ENCODE measurements at regions of chr20 and their contacts with region 1.

Region 1: DNA sequence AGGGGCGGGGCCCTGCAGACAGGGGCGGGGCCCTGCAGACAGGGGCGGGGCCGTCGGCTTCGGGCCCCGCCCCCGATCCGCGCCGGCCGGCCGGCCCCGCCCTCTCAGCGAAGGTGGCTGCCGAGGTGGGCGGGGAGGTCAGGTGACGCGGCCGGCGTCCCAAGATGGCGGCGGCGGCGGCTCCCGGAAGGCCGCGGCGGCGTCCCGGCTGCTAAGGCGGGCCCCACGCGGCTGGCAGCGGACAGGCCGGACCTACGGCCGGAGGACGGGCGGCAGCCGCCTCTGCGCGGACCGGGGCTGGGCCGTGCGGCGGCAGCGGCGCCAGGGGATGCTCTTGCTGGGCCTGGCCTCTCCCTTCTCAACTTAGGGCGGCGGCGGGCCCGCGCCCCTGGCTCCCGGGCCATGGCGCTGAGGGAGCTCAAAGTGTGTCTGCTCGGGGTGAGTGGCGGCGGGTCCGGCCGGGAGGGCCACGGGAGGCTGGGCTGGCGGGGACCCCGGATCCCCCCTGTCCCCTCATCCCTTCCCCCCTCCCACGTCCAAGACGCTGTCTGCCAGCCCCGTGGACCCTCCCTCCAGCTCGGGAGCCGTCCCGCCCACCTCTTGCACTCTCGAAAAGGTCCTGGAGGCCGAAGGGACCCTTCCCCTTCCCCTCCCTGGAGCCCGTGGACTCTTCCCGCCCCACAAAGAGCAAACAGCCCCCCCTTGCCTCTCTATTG is at the start of gene RAB22A:
- DNase-seq: peak; percentile 66
- H3K4me3 ChIP-seq: peak within 1 kb of the TSS; percentile 96 to 99 (median 98)
- H3K27ac ChIP-seq: peak within 1 kb of the TSS; percentile 85
- H3K4me1 ChIP-seq: peaks cover 10% of the 10 kb centered on the region
- H3K27me3 ChIP-seq: no peaks in the 10 kb centered on the region
- CTCF ChIP-seq: no peak
- POLR2A ChIP-seq: peak; percentile 95
- total RNA-seq, gene RAB22A: 15.7 and 16.3 TPM in 2 replicates

Region 2: DNA sequence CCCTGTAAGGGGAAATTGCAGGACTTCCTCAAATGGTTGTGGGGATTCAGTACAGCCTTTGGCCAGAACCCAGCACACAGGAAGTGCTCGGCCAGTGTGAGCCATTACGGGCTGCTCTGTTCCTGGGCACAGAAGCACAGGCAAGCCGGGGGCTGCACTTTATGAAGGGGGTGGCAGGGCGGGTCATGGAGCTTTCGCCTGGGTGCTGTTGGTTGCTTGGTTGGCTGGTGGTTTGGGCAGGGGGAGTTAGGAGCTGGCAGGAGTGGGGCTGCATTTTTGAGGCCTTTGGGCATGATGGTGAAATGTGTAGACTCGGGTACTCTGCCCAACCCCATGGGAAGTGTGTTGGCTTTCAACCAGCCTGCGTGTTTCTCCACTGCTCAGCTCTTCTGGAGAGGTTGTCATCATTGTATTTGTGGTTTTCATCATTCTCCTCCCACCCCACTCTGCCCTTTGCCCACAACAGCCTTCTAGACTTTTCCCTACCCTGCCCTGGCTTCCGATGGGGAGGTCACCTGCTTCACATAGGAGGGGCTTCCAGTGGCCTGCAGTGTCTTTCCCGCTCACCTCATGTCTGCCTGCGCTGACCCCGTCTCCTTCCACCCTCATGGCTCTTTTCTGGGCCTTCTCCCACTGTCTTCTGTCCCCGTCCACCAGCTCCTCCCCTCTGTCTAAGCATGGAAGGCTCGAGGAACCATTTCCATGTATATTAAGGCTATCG is 934.6 kb before region 1 on chr20:
- CTCF ChIA-PET with region 1: no interaction called
- POLR2A ChIA-PET with region 1: no interaction called
- dilution Hi-C with region 1: no loop called
- intact Hi-C with region 1: no loop called
- DNase-seq: no peak
- H3K4me3 ChIP-seq: no peak overlapping the region
- H3K27ac ChIP-seq: no peak overlapping the region
- H3K4me1 ChIP-seq: no peaks in the 10 kb centered on the region
- H3K27me3 ChIP-seq: no peaks in the 10 kb centered on the region
- CTCF ChIP-seq: no peak
- POLR2A ChIP-seq: no peak

Region 3: GRCh38 chr20:58251921-58252591 is 57.7 kb before region 1 on chr20:
- CTCF ChIA-PET with region 1: interaction called, 3 read pairs
- POLR2A ChIA-PET with region 1: no interaction called
- dilution Hi-C with region 1: no loop called
- intact Hi-C with region 1: loop called (anchors 2 kb)
- DNase-seq: peak; percentile 80
- H3K4me3 ChIP-seq: no peak overlapping the region
- H3K27ac ChIP-seq: peak overlapping the region; percentile 73
- H3K4me1 ChIP-seq: peaks cover 21% of the 10 kb centered on the region
- H3K27me3 ChIP-seq: no peaks in the 10 kb centered on the region
- CTCF ChIP-seq: no peak
- POLR2A ChIP-seq: no peak

Region 4: GRCh38 chr20:58342104-58342960 is 32.6 kb after region 1 on chr20:
- CTCF ChIA-PET with region 1: no interaction called
- POLR2A ChIA-PET with region 1: no interaction called
- dilution Hi-C with region 1: no loop called
- intact Hi-C with region 1: loop called (anchors 1 kb)
- DNase-seq: peak; percentile 69
- H3K4me3 ChIP-seq: peak overlapping the region in 1 of 3 experiments; percentile 24
- H3K27ac ChIP-seq: peak overlapping the region; percentile 79
- H3K4me1 ChIP-seq: peaks cover 36% of the 10 kb centered on the region
- H3K27me3 ChIP-seq: no peaks in the 10 kb centered on the region
- CTCF ChIP-seq: no peak
- POLR2A ChIP-seq: no peak

Region 5: DNA sequence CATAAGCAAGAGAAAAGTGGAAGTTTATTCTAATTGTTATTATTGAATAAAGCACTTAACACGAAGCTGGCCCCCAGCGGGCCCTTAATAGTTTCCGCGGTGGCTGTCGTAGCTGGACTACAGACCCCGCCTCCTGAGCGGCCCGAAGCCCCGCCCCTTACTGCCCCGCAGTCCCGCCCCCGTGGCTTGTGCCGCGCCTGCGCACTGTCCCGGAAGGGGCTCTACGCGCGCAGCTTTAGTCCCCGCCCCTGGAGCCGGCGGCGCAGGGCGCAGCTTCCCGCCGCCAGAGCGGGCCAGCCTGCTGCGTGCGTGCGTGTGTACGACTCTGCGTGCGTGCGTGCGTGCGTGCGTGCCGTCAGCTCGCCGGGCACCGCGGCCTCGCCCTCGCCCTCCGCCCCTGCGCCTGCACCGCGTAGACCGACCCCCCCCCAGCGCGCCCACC is 79.2 kb after region 1 on chr20 and contains the start of gene VAPB:
- CTCF ChIA-PET with region 1: no interaction called
- POLR2A ChIA-PET with region 1: interaction called, 5 read pairs
- dilution Hi-C with region 1: no loop called
- intact Hi-C with region 1: loop called (anchors 1 kb)
- DNase-seq: peak; percentile 97
- H3K4me3 ChIP-seq: peak within 1 kb of the TSS; percentile 54 to 98 (median 81)
- H3K27ac ChIP-seq: peak within 1 kb of the TSS; percentile 74
- H3K4me1 ChIP-seq: peaks cover 14% of the 10 kb centered on the region
- H3K27me3 ChIP-seq: no peaks in the 10 kb centered on the region
- CTCF ChIP-seq: no peak
- POLR2A ChIP-seq: peak; percentile 76
- total RNA-seq, gene VAPB: 47.8 and 48.9 TPM in 2 replicates

Region 6: DNA sequence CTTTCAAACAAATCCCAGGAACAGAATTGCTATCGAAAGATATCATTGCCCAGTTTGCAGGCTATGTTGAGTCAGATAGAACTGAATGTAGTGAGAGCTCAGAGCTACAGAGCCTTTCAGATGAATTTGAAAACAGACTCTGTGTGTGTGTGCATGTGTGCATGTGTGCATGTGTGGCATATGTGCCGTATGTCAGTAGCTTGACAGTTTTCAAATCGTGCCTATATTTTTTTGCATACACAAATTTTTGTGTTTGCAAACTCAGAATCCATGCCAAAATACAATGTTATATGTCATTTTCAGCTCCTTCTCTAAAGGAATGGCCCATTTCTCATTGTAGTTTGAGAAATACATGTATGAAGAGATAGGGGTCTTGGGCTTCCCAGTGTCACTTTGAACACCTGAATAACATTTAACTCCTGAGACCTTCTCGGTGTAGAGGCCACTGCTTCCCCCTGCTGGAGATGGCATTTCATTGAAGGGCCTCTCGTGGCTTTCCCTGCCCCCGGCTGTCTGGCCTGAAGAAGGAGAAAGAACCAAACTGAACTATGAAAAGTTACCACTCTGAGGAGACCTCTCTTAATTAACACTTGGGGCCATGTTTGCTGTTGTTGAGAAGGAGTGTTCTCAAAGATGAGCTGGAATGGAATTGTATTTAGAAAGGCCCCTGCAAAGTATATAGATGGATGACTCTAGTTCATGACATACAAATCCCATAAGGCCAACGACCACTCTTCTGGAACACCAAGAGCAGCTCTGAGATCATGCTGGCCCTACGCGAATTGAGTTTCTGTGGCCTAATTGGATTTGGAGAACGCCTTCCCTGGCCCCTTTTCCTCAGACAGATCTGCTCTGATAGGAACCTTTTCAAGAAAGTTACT is 138.0 kb after region 1 on chr20:
- CTCF ChIA-PET with region 1: interaction called, 4 read pairs
- POLR2A ChIA-PET with region 1: no interaction called
- dilution Hi-C with region 1: no loop called
- intact Hi-C with region 1: loop called (anchors 2 kb)
- DNase-seq: peak; percentile 66
- H3K4me3 ChIP-seq: no peak overlapping the region
- H3K27ac ChIP-seq: no peak overlapping the region
- H3K4me1 ChIP-seq: no peaks in the 10 kb centered on the region
- H3K27me3 ChIP-seq: no peaks in the 10 kb centered on the region
- CTCF ChIP-seq: peak; percentile 68 to 73
- POLR2A ChIP-seq: no peak

Region 7: GRCh38 chr20:58650776-58651558 is 341.2 kb after region 1 on chr20 and contains the start of gene STX16:
- CTCF ChIA-PET with region 1: no interaction called
- POLR2A ChIA-PET with region 1: no interaction called
- dilution Hi-C with region 1: no loop called
- intact Hi-C with region 1: no loop called
- DNase-seq: peak; percentile 87
- H3K4me3 ChIP-seq: peak within 1 kb of the TSS; percentile 86 to 93 (median 89)
- H3K27ac ChIP-seq: peak within 1 kb of the TSS; percentile 81
- H3K4me1 ChIP-seq: peaks cover 31% of the 10 kb centered on the region
- H3K27me3 ChIP-seq: no peaks in the 10 kb centered on the region
- CTCF ChIP-seq: peak; percentile 46 to 65
- POLR2A ChIP-seq: peak; percentile 68
- total RNA-seq, gene STX16: 58.5 and 63.5 TPM in 2 replicates

Region 8: GRCh38 chr20:58692594-58693226 is 383.0 kb after region 1 on chr20 and contains the start of gene NPEPL1:
- CTCF ChIA-PET with region 1: no interaction called
- POLR2A ChIA-PET with region 1: no interaction called
- dilution Hi-C with region 1: no loop called
- intact Hi-C with region 1: loop called (anchors 5 kb)
- DNase-seq: peak; percentile 45
- H3K4me3 ChIP-seq: peak within 1 kb of the TSS in 2 of 3 experiments; percentile 27 to 49
- H3K27ac ChIP-seq: peak within 1 kb of the TSS; percentile 79
- H3K4me1 ChIP-seq: peaks cover 14% of the 10 kb centered on the region
- H3K27me3 ChIP-seq: no peaks in the 10 kb centered on the region
- CTCF ChIP-seq: no peak
- POLR2A ChIP-seq: peak; percentile 45
- total RNA-seq, gene NPEPL1: 39.1 and 40.8 TPM in 2 replicates

Region 9: DNA sequence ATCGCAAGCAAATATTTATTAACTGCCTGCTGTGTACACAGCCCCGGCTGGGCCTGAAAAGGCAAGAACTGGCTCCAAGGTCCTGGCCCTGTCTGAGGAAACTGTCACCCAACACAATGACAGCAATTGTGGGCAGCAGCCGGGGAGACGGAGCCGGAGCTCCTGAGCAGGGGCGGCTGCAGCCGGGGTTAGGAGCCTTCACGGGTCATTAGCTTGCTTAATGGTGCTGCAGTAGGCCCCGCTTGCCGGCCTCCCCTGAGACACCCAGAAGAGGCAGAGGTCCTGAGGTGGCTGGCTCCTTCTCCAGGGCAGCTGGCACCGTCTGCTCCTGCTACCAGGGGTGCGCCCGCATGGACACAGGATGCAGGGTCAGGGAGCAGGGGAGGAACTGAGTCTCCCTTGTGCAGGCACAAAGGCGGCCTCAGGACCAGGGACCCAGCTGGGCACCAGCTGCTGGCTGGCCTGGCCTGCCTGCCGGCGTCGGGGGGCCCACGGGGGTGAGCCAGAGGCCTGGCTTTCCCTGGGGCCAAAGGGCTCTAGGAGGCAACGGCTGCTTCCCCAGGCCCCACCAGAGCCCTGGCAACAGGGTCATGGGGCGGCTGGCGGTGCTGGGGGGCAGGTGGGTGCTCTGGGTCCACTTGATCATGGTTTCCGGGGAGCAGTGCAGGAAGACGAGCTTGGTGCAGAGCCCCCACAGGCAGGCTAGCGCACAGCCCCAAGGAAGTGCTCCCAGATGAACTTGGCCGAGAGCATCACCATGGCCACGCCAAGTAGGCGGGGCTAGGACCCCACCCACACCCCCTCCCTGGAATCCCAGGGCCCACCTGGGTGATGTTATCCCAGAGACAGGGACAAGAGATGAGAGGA is 407.1 kb after region 1 on chr20:
- CTCF ChIA-PET with region 1: no interaction called
- POLR2A ChIA-PET with region 1: no interaction called
- dilution Hi-C with region 1: no loop called
- intact Hi-C with region 1: no loop called
- DNase-seq: no peak
- H3K4me3 ChIP-seq: no peak overlapping the region
- H3K27ac ChIP-seq: no peak overlapping the region
- H3K4me1 ChIP-seq: no peaks in the 10 kb centered on the region
- H3K27me3 ChIP-seq: peaks cover 0 to 2% of the 10 kb centered on the region in 2 experiments
- CTCF ChIP-seq: no peak
- POLR2A ChIP-seq: no peak